ENCODE measurements at regions of chr9 and their contacts with region 1.

Region 1: DNA sequence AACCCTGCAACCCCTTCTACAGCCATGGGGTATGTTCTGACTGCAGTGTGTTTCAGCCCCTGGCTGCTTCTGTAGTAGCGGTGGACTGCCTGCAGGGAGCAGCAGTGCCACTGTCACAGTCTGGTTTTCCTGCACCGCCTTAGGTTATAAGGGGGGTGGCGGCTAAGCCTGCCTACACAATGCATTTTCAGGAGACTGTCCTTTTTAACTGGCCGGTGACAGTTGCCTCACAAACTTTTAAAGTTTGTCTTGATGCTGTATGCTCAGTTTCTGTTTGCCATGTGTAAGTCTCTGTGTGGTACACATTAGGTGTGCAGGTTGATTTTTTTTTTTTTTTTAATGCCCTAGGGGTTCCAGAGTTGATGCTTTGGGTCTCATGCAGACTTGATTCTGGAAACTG is 53.0 kb downstream of the NUP214 start:
- DNase-seq: peak; percentile 84
- ATAC-seq: peak; percentile 98
- H3K4me3 Mint-ChIP-seq: no peak overlapping the region
- H3K27ac Mint-ChIP-seq: no peak overlapping the region
- H3K4me1 Mint-ChIP-seq: peaks cover 2% of the 10 kb centered on the region
- H3K27me3 Mint-ChIP-seq: no peaks in the 10 kb centered on the region

Region 2: DNA sequence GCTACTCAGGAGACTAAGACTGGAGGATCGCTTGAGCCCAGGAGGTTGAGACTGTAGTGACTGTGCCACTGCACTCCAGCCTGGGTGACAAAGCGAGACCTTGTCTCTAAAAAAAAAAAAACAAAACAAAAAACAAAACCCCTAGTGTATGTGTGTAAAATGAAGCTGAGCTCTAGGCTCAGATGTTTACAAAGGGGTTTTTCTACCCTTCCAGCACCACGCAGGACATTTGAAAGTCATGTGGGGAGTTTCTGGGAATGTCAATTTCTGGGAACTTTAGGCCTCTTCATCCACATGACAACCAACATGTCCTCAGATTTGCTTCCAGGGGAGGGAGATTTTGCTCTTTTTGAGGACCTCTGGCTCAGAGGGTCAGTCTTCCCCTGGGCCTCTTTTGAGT is 124.5 kb before region 1 on chr9:
- CTCF ChIA-PET with region 1: no interaction called
- POLR2A ChIA-PET with region 1: no interaction called
- intact Hi-C with region 1: loop called in 1 of 2 experiments (anchors 1 kb)
- DNase-seq: no peak
- ATAC-seq: no peak
- H3K4me3 Mint-ChIP-seq: no peak overlapping the region
- H3K27ac Mint-ChIP-seq: no peak overlapping the region
- H3K4me1 Mint-ChIP-seq: no peaks in the 10 kb centered on the region
- H3K27me3 Mint-ChIP-seq: no peaks in the 10 kb centered on the region

Region 3: DNA sequence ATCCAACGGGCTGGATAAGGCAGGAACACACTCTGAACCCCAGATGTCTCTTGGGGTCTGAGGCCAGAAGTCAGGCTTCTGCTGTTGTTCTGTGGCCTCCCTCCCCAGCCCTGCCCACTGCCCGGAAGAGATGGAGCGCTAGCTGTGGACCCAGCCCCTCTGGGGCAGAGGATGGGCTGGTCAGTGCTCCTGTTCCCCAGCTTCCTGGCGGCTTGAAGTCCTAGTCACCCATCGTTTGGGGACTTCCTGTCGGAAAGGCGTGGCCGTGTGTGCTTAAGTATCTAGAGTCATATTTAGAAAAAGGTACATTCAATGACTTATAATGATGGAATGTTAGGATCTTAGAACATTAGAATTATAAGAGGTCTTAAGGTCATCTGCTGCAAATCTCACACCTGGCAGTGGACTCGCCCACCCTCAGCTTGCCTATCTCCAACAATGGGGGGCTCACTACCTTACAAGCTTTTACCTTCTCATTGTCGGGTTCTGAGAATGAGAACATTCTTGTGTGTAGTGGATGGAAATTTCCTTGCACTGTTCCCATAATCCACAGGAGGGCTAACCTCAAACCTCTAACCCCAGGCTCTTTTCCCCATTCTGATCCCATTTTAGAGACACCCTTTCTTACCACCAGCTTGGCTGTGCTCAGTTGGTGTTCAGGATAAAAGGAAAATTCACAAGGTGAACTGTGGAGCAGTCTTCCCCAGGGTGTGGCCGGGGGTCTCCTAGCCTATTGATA is 95.4 kb before region 1 on chr9:
- CTCF ChIA-PET with region 1: no interaction called
- POLR2A ChIA-PET with region 1: no interaction called
- intact Hi-C with region 1: no loop called
- DNase-seq: no peak
- ATAC-seq: no peak
- H3K4me3 Mint-ChIP-seq: no peak overlapping the region
- H3K27ac Mint-ChIP-seq: no peak overlapping the region
- H3K4me1 Mint-ChIP-seq: no peaks in the 10 kb centered on the region
- H3K27me3 Mint-ChIP-seq: peaks cover 2% of the 10 kb centered on the region

Region 4: DNA sequence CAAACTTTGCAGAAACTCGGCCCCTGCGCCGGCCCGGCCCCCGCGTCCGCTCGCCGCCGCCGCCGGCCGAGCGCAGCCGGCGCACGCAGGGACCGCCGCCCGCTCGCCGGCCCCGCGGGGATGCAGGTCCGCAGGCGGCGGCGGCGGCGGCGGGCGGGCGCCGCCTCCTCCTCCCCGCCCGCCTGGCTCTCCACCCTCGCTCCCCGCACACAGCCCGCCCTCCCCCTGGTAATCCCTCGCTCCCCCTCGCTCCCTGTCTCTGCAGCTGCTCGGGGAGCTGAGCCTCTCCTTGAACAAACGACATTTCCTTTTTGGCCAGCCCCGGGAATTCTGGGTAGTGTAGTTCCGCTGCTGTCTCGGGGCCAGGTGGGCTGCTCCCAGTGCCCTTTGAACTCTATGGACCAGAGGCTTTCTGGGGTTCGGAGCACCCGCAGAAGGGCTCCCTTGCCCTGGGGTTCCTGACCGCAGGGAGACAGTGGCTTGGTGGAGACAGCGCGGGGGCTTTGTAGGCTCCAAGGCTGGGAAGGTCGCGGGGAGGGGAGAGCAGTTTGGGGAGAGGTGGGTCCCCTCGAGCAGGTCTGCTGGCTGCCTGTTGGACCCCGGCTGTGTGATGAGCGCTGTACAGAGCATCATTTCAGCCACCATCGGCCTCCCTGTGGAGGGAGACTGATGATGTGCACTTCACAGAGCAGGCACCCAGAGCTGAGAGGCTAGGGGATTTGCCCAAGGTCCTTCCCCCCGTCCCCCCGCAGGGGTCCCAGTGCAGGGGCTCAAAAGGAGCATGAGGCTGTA is 99.7 kb after region 1 on chr9:
- CTCF ChIA-PET with region 1: interaction called, 3 read pairs
- POLR2A ChIA-PET with region 1: interaction called, 3 read pairs
- intact Hi-C with region 1: loop called (anchors 1 kb)
- DNase-seq: peak; percentile 88
- ATAC-seq: peak; percentile 55
- H3K4me3 Mint-ChIP-seq: peak overlapping the region; percentile 75
- H3K27ac Mint-ChIP-seq: peak overlapping the region; percentile 71
- H3K4me1 Mint-ChIP-seq: peaks cover 22% of the 10 kb centered on the region
- H3K27me3 Mint-ChIP-seq: peaks cover 7% of the 10 kb centered on the region

Measured in activated CD4-positive, alpha-beta T cell treated with anti-CD3 and anti-CD28 coated beads for 36 hours (primary cell).